ENCODE measurements at regions of chr20 and their contacts with region 1.

Region 1: GRCh38 chr20:8019246-8019997 is at the start of gene TMX4:
- DNase-seq: peak; percentile 96
- H3K4me3 ChIP-seq: peak within 1 kb of the TSS; percentile 92
- H3K27ac ChIP-seq: peak within 1 kb of the TSS; percentile 88
- H3K4me1 ChIP-seq: peaks cover 30% of the 10 kb centered on the region
- CTCF ChIP-seq: no peak; the same call in 1 of the 2 replicates
- total RNA-seq, gene TMX4: 22.4 and 24.9 TPM in 2 replicates

Region 2: DNA sequence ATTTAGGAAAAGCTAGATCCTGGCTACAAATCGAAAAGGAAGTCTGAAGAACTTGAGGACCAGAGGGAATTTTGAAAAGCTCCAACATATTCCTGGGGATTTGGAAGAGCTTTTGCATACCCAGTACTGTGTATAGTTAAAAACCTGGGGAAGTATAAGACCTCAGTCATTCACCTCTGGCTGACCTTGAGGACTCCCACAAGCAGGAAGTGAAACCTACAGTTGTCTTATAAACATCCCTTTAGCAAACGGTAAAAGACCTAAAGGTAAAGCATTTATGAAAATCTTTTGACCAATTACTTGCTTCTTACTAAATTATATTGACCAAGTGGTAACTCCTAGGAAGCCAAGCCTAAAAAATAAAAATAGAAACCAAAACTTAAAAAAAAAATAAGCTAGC is 254.2 kb before region 1 on chr20:
- CTCF ChIA-PET with region 1: no interaction called
- POLR2A ChIA-PET with region 1: interaction called, 4 read pairs
- intact Hi-C with region 1: loop called (anchors 5 kb)
- DNase-seq: peak; percentile 90
- H3K4me3 ChIP-seq: peak overlapping the region; percentile 26
- H3K27ac ChIP-seq: peak overlapping the region; percentile 82
- H3K4me1 ChIP-seq: peaks cover 60% of the 10 kb centered on the region
- CTCF ChIP-seq: no peak

Region 3: DNA sequence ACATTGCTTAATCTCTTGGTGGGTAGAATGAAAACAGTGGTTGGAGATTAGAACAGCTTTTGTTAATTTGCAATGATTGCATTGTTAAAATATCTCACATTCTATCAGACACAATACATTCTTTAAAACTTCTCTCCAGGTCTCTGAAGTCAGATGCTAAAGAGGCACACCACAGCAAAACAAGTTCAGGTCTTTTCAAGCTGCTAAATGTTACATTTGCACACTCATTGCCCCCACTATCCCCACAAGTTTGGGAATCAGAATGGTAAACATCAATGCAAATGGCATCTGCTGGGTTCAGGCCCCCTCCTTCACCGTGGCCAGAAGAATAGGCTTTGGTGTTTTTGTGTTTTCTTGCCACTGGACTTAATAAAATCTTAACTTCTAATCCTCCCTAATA is 69.0 kb before region 1 on chr20:
- CTCF ChIA-PET with region 1: no interaction called
- POLR2A ChIA-PET with region 1: no interaction called
- intact Hi-C with region 1: no loop called
- DNase-seq: no peak
- H3K4me3 ChIP-seq: no peak overlapping the region
- H3K27ac ChIP-seq: no peak overlapping the region
- H3K4me1 ChIP-seq: no peaks in the 10 kb centered on the region
- CTCF ChIP-seq: no peak

Region 4: GRCh38 chr20:8036771-8037170 is 17.3 kb after region 1 on chr20:
- CTCF ChIA-PET with region 1: no interaction called
- POLR2A ChIA-PET with region 1: interaction called, 12 read pairs
- intact Hi-C with region 1: no loop called
- DNase-seq: no peak
- H3K4me3 ChIP-seq: no peak overlapping the region
- H3K27ac ChIP-seq: no peak overlapping the region
- H3K4me1 ChIP-seq: no peaks in the 10 kb centered on the region
- CTCF ChIP-seq: no peak

Region 5: DNA sequence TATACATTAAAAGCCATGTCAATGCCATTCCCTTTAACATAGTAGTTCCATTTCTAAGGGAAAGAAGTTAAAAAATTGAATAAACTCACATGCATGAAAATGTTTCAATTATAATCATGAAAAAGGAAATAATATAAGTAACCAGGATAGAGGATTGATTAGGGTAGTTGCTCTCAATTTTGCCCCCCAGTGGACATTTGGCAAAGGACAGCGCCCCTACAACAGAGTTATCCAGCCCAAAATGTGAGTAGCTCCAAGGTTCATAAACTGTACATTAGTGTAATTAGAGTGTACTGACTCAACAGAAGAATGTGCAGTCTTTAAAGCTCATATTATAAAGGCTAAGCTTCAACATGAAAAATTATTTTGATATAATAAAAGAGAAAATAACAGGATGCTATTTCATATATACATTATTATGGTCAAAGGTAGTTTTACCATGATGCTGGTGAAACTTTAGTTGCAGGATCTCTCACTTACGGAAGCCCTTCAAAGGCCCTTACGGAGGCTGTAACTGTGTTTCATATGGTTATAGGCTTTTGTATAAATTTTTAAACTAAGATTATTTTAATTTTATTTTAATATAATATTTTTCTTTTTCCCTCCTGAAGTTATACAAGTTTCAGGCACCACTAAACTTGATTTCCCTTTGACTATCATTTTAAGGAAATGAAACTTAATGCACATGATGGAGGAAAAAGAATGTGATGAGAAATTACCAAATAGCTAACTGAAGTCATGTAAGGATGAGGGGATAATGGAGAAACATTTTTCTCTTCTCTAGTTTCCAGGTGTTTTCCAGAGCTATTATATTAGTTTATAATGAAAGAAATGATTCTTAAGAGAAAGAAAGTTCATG is 516.2 kb after region 1 on chr20:
- CTCF ChIA-PET with region 1: no interaction called
- POLR2A ChIA-PET with region 1: no interaction called
- intact Hi-C with region 1: loop called (anchors 2 kb)
- DNase-seq: peak; percentile 69
- H3K4me3 ChIP-seq: peak overlapping the region; percentile 72
- H3K27ac ChIP-seq: peak overlapping the region; percentile 93
- H3K4me1 ChIP-seq: peaks cover 89% of the 10 kb centered on the region
- CTCF ChIP-seq: peak; percentile 95

Measured in OCI-LY7 (cell line).